CD4-positive, alpha-beta T cell (primary cell): ENCODE measurements at regions of chr9 and their contacts with region 1.

Region 1: DNA sequence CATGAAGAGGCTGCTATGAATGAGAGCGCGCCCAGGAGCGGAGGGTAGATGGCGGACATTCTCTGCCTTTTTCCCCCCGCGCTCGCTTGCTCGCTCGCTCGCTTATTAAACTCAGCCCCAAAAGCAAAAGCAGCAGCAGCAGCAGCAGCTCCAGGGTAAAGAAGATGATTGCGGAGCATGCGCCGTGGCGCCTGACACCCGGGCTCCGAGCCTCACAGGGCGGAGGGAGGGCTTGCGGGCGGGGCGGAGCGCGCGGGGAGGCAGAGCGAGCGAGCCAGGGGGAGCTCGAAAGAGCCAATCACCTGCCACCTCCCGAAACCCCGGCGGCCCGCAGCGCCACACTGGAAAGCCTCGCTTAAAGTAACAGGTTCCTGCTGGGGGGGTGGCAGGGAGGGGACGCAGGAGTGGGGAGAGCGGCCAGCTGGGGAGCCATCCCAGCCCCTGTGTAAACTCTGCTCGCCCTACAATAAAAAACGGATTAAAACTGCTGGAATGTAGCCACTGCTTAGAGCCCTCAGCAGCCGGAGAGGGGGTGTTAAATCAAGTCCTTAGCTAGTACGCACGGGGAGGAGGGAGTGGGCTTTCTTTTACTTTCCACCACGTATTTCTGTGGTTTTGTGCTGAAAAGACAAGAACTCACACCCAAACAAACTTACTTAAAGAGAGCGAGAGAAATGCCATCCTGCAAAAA is at the start of gene MLLT3:
- DNase-seq: peak; percentile 95 to 98 (median 97)
- ATAC-seq: peak; percentile 73
- H3K4me3 ChIP-seq: peak within 1 kb of the TSS; percentile 97
- H3K4me3 Mint-ChIP-seq: peak within 1 kb of the TSS; percentile 93
- H3K27ac ChIP-seq: peak within 1 kb of the TSS; percentile 79 to 92
- H3K27ac Mint-ChIP-seq: peak within 1 kb of the TSS; percentile 93
- H3K4me1 ChIP-seq: peaks cover 24% of the 10 kb centered on the region
- H3K4me1 Mint-ChIP-seq: peaks cover 46% of the 10 kb centered on the region
- H3K27me3 ChIP-seq: no peaks in the 10 kb centered on the region
- H3K27me3 Mint-ChIP-seq: no peaks in the 10 kb centered on the region
- CTCF ChIP-seq: no peak
- total RNA-seq, gene MLLT3: 59.2 to 60.6 TPM

Region 2: DNA sequence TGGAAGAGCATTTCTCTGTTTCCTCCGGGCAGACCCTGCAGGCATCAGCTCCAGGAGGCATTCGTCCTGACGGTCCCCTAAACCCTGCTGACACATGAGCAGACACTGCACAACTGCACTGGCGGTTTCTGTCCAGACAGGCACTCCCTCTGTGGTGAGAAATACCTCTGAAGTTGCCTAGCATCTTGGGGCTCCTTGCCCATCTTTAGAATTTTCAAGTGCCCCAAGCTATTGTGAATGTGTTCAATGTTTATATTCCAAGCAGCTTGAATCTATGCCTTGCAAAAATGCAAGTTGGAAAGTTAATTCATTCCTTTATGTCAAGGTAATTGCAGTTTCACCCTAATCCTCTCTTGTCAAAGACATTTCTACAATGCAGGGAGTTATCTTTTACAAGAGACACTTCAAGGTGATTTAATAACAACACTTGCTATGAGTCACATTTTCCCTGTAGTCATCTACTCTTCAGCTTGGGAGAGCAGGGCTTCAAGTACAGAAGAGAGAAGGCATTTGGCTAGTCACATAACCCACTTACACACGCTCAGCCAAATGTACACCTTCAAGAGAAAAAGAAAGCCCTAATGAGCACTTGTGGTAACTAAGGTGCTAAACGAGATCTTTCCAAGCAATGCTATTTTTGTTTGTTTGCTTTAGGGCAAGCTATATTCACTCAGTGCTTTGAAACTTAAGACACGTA is 302.7 kb before region 1 on chr9:
- CTCF ChIA-PET with region 1: no interaction called
- POLR2A ChIA-PET with region 1: interaction called, 19 read pairs
- intact Hi-C with region 1: loop called in 1 of 2 experiments (anchors 2 kb)
- DNase-seq: peak in 6 of 14 experiments; percentile 7 to 40 (median 18)
- ATAC-seq: no peak
- H3K4me3 ChIP-seq: no peak overlapping the region
- H3K4me3 Mint-ChIP-seq: no peak overlapping the region
- H3K27ac ChIP-seq: no peak overlapping the region
- H3K27ac Mint-ChIP-seq: peak overlapping the region; percentile 89
- H3K4me1 ChIP-seq: peaks cover 88% of the 10 kb centered on the region
- H3K4me1 Mint-ChIP-seq: peaks cover 88% of the 10 kb centered on the region
- H3K27me3 ChIP-seq: no peaks in the 10 kb centered on the region
- H3K27me3 Mint-ChIP-seq: no peaks in the 10 kb centered on the region
- CTCF ChIP-seq: no peak

Region 3: GRCh38 chr9:20426019-20426418 is 196.5 kb before region 1 on chr9:
- CTCF ChIA-PET with region 1: no interaction called
- POLR2A ChIA-PET with region 1: no interaction called
- intact Hi-C with region 1: loop called in 1 of 2 experiments (anchors 5 kb)
- DNase-seq: no peak
- ATAC-seq: no peak
- H3K4me3 ChIP-seq: no peak overlapping the region
- H3K4me3 Mint-ChIP-seq: no peak overlapping the region
- H3K27ac ChIP-seq: no peak overlapping the region
- H3K27ac Mint-ChIP-seq: no peak overlapping the region
- H3K4me1 ChIP-seq: no peaks in the 10 kb centered on the region
- H3K4me1 Mint-ChIP-seq: peaks cover 38% of the 10 kb centered on the region
- H3K27me3 ChIP-seq: no peaks in the 10 kb centered on the region
- H3K27me3 Mint-ChIP-seq: no peaks in the 10 kb centered on the region
- CTCF ChIP-seq: no peak

Region 4: GRCh38 chr9:20558566-20559016 is 63.9 kb before region 1 on chr9:
- CTCF ChIA-PET with region 1: interaction called, 4 read pairs
- POLR2A ChIA-PET with region 1: interaction called, 7 read pairs
- intact Hi-C with region 1: loop called (anchors 1 to 5 kb)
- DNase-seq: peak in 1 of 14 experiments; percentile 28
- ATAC-seq: peak; percentile 24
- H3K4me3 ChIP-seq: no peak overlapping the region
- H3K4me3 Mint-ChIP-seq: no peak overlapping the region
- H3K27ac ChIP-seq: no peak overlapping the region
- H3K27ac Mint-ChIP-seq: peak overlapping the region; percentile 16
- H3K4me1 ChIP-seq: peaks cover 20% of the 10 kb centered on the region
- H3K4me1 Mint-ChIP-seq: peaks cover 91% of the 10 kb centered on the region
- H3K27me3 ChIP-seq: no peaks in the 10 kb centered on the region
- H3K27me3 Mint-ChIP-seq: no peaks in the 10 kb centered on the region
- CTCF ChIP-seq: no peak

Region 5: DNA sequence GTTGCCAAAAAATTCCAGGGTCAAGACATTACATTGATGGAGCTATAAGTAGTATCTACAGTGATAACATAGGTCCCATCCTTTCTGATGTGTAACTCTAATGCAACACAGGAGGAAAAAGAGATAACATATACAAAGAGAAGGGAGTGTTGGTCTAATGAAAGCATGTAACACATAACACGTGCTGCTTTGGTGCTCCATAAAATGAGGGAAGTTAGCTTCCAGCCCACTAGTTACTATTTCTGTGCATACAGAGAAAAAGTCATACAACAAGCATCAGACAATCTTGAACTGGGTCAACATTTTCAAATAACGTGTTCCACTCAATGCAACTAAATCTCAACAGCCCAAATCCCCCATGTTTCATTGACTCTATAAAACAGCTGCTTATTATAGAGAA is 11.9 kb before region 1 on chr9:
- CTCF ChIA-PET with region 1: interaction called, 5 read pairs
- POLR2A ChIA-PET with region 1: interaction called, 21 read pairs
- intact Hi-C with region 1: loop called in 1 of 2 experiments (anchors 2 kb)
- DNase-seq: no peak
- ATAC-seq: no peak
- H3K4me3 ChIP-seq: no peak overlapping the region
- H3K4me3 Mint-ChIP-seq: peak overlapping the region; percentile 11
- H3K27ac ChIP-seq: no peak overlapping the region
- H3K27ac Mint-ChIP-seq: no peak overlapping the region
- H3K4me1 ChIP-seq: no peaks in the 10 kb centered on the region
- H3K4me1 Mint-ChIP-seq: peaks cover 87% of the 10 kb centered on the region
- H3K27me3 ChIP-seq: no peaks in the 10 kb centered on the region
- H3K27me3 Mint-ChIP-seq: no peaks in the 10 kb centered on the region
- CTCF ChIP-seq: no peak

Region 6: DNA sequence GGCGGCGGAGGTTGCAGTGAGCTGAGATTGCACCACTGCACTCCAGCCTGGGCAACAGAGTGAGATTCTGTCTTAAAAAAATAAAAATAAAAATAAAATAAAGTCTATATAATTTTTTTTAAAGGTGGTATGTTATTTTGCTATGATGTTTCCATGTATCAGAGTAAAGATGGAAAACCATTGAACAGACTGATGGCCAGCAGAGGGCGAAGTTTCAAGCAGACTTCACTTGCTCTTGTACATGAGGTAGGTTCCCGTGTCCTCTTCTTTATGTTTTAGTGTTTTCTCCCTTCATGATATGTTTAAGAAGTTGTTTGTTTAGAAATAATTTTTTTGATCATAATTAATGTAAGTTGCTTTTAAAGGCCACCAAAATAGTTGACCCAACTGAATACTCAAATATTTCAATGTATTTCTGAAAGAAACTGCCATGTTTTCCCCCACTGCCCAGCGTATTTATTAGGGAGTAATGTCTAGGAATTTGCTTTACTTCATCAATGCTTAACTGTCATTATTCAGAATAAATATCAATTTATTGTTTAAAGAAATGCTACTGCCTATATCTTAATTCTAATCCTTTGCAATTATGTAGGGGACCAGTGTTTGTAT is 262.6 kb after region 1 on chr9:
- CTCF ChIA-PET with region 1: no interaction called
- POLR2A ChIA-PET with region 1: no interaction called
- intact Hi-C with region 1: loop called in 1 of 2 experiments (anchors 5 kb)
- DNase-seq: peak; percentile 30 to 74 (median 52)
- ATAC-seq: peak; percentile 56
- H3K4me3 ChIP-seq: no peak overlapping the region
- H3K4me3 Mint-ChIP-seq: no peak overlapping the region
- H3K27ac ChIP-seq: no peak overlapping the region
- H3K27ac Mint-ChIP-seq: no peak overlapping the region
- H3K4me1 ChIP-seq: no peaks in the 10 kb centered on the region
- H3K4me1 Mint-ChIP-seq: no peaks in the 10 kb centered on the region
- H3K27me3 ChIP-seq: no peaks in the 10 kb centered on the region
- H3K27me3 Mint-ChIP-seq: no peaks in the 10 kb centered on the region
- CTCF ChIP-seq: peak; percentile 79

Region 7: DNA sequence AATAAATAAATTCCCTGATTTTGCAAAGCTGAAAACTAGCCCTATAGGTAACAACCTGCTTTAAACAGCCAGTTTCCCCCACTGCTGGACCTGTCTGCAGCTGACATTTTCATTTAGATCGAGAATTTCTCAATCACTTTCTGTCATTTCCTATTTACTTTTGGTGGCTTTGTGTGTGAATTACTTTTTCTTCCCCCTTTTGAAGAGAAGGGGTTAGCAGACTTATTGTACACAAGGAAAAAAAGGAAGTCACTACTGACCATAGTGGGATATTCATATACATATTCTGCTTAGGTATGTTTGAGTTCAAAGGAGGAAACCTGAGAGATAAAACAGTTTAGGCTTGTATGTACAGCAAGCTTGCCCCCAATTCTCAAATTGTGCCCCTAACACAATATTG is 482.3 kb after region 1 on chr9:
- CTCF ChIA-PET with region 1: no interaction called
- POLR2A ChIA-PET with region 1: no interaction called
- intact Hi-C with region 1: loop called in 1 of 2 experiments (anchors 5 kb)
- DNase-seq: no peak
- ATAC-seq: no peak
- H3K4me3 ChIP-seq: no peak overlapping the region
- H3K4me3 Mint-ChIP-seq: no peak overlapping the region
- H3K27ac ChIP-seq: no peak overlapping the region
- H3K27ac Mint-ChIP-seq: no peak overlapping the region
- H3K4me1 ChIP-seq: no peaks in the 10 kb centered on the region
- H3K4me1 Mint-ChIP-seq: no peaks in the 10 kb centered on the region
- H3K27me3 ChIP-seq: no peaks in the 10 kb centered on the region
- H3K27me3 Mint-ChIP-seq: no peaks in the 10 kb centered on the region
- CTCF ChIP-seq: no peak

Region 8: GRCh38 chr9:22265038-22265437 is 1642.6 kb after region 1 on chr9:
- CTCF ChIA-PET with region 1: no interaction called
- POLR2A ChIA-PET with region 1: no interaction called
- intact Hi-C with region 1: no loop called
- DNase-seq: no peak
- ATAC-seq: no peak
- H3K4me3 ChIP-seq: no peak overlapping the region
- H3K4me3 Mint-ChIP-seq: no peak overlapping the region
- H3K27ac ChIP-seq: no peak overlapping the region
- H3K27ac Mint-ChIP-seq: no peak overlapping the region
- H3K4me1 ChIP-seq: no peaks in the 10 kb centered on the region
- H3K4me1 Mint-ChIP-seq: no peaks in the 10 kb centered on the region
- H3K27me3 ChIP-seq: no peaks in the 10 kb centered on the region
- H3K27me3 Mint-ChIP-seq: peaks cover 8% of the 10 kb centered on the region
- CTCF ChIP-seq: no peak